Naive thymus-derived CD4-positive, alpha-beta T cell (primary cell): ENCODE measurements at regions of chr19 and their contacts with region 1.

Region 1: GRCh38 chr19:15449620-15450527 is at the start of gene WIZ:
- DNase-seq: peak; percentile 74 to 92 (median 86)
- ATAC-seq: peak; percentile 93
- H3K4me3 ChIP-seq: peak within 1 kb of the TSS; percentile 35
- H3K4me3 Mint-ChIP-seq: peak within 1 kb of the TSS; percentile 62 to 86 (median 82)
- H3K27ac ChIP-seq: peak within 1 kb of the TSS; percentile 72
- H3K27ac Mint-ChIP-seq: peak within 1 kb of the TSS; percentile 80 to 96 (median 91)
- H3K4me1 ChIP-seq: peaks cover 0 to 5% of the 10 kb centered on the region in 2 donors
- H3K4me1 Mint-ChIP-seq: peaks cover 5 to 32% (median 30%) of the 10 kb centered on the region in 7 donors
- H3K27me3 ChIP-seq: no peaks in the 10 kb centered on the region
- H3K27me3 Mint-ChIP-seq: no peaks in the 10 kb centered on the region
- total RNA-seq, gene WIZ: 20.1 to 34.9 (median 24.8) TPM

Region 2: DNA sequence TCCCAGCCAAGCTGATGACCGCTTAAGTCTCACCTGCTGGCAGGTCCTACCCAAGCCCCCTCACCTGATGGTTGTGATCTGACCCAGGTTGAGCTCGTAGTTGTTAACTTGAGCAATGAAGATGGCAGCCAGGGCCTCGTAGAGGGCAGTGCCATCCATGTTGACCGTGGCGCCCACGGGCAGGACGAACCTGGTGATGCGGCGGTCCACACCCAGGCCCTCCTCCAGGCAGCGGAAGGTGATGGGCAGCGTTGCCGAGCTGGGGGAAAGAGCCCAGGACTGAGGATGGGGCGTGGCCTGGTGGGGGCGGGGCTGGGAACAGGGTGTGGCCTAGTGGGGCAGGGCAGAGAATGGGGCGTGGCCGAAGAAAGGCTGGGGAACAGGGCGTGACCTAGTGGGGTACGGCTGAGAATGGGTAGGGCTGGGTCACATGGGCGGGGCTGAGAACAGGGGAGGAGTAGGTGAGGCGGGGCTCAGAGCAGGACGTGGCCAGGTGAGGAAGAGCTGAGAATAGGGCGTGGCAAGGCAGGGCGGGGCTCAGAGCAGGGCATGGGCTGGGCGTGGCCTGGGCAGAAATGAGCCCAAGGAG is 495.7 kb before region 1 on chr19:
- CTCF ChIA-PET with region 1: no interaction called
- POLR2A ChIA-PET with region 1: no interaction called
- intact Hi-C with region 1: no loop called
- DNase-seq: no peak
- ATAC-seq: no peak
- H3K4me3 ChIP-seq: no peak overlapping the region
- H3K4me3 Mint-ChIP-seq: no peak overlapping the region
- H3K27ac ChIP-seq: no peak overlapping the region
- H3K27ac Mint-ChIP-seq: no peak overlapping the region
- H3K4me1 ChIP-seq: no peaks in the 10 kb centered on the region
- H3K4me1 Mint-ChIP-seq: peaks cover 0 to 2% (median 0%) of the 10 kb centered on the region in 7 donors
- H3K27me3 ChIP-seq: no peaks in the 10 kb centered on the region
- H3K27me3 Mint-ChIP-seq: peaks cover 0 to 32% (median 18%) of the 10 kb centered on the region in 5 donors

Region 3: GRCh38 chr19:15332311-15332996 is 117.4 kb before region 1 on chr19 and contains the start of gene BRD4:
- CTCF ChIA-PET with region 1: no interaction called
- POLR2A ChIA-PET with region 1: no interaction called
- intact Hi-C with region 1: no loop called
- DNase-seq: peak; percentile 67 to 90 (median 81)
- ATAC-seq: peak; percentile 82
- H3K4me3 ChIP-seq: peak within 1 kb of the TSS; percentile 91
- H3K4me3 Mint-ChIP-seq: peak within 1 kb of the TSS; percentile 93 to 99 (median 96)
- H3K27ac ChIP-seq: peak within 1 kb of the TSS; percentile 91
- H3K27ac Mint-ChIP-seq: peak within 1 kb of the TSS; percentile 85 to 96 (median 94)
- H3K4me1 ChIP-seq: peaks cover 28 to 29% of the 10 kb centered on the region in 2 donors
- H3K4me1 Mint-ChIP-seq: peaks cover 32 to 52% (median 47%) of the 10 kb centered on the region in 7 donors
- H3K27me3 ChIP-seq: no peaks in the 10 kb centered on the region
- H3K27me3 Mint-ChIP-seq: no peaks in the 10 kb centered on the region
- total RNA-seq, gene BRD4: 104 to 168 (median 128) TPM

Region 4: GRCh38 chr19:15432629-15433518 is 17.0 kb before region 1 on chr19:
- CTCF ChIA-PET with region 1: interaction called, 3 read pairs
- POLR2A ChIA-PET with region 1: interaction called, 12 read pairs
- intact Hi-C with region 1: loop called (anchors 1 to 2 kb)
- DNase-seq: peak; percentile 87 to 95 (median 92)
- ATAC-seq: peak; percentile 99
- H3K4me3 ChIP-seq: peak overlapping the region; percentile 96
- H3K4me3 Mint-ChIP-seq: peak overlapping the region; percentile 86 to 99 (median 97)
- H3K27ac ChIP-seq: peak overlapping the region; percentile 90
- H3K27ac Mint-ChIP-seq: peak overlapping the region; percentile 85 to 98 (median 94)
- H3K4me1 ChIP-seq: peaks cover 15 to 26% of the 10 kb centered on the region in 2 donors
- H3K4me1 Mint-ChIP-seq: peaks cover 24 to 32% (median 29%) of the 10 kb centered on the region in 7 donors
- H3K27me3 ChIP-seq: no peaks in the 10 kb centered on the region
- H3K27me3 Mint-ChIP-seq: peaks cover 0 to 2% (median 0%) of the 10 kb centered on the region in 5 donors